ENCODE measurements at regions of chr15 and their contacts with region 1.

Region 1: DNA sequence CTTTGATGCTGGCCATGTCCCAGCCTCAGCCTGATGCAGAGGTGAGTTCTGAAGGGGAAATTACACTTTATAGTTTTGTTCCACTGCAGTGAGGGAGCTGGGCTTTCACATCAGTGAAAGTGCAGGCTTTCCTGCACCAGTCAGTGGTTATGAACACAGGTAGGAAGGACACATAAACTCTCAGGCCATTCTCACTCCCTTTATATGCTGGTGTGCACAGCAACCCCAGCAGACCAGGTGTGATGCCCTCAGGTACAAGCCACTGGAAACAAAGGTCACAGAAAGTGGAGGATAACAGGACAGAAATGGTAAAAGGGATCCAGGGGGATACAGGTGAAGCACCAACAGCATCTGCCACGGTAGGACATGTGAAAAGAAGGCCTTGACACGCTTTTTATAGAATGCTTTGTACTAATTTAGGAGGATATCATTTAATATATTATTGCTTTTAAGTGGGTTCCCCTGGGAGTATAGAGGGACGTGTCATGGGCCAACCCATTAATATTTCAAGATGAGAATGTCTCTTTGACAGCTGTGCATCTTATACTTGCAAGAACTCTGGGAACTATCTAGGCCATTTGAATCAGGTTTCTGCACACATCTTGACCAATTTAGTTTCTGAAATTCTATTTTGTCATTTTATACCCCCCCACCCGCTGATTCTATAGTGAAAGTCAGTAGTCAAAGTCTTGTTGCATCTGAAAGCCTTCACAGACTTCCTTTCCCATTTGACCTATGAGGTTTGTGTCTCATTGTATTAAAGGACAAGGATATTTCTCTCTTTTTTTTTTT is 25.0 kb upstream of the BLM start:
- DNase-seq: no peak
- H3K4me3 ChIP-seq: no peak overlapping the region
- H3K27ac ChIP-seq: peak overlapping the region in 1 of 8 donors; percentile 6
- H3K4me1 ChIP-seq: peaks cover 0 to 17% (median 7%) of the 10 kb centered on the region in 6 donors
- H3K27me3 ChIP-seq: no peaks in the 10 kb centered on the region
- CTCF ChIP-seq: no peak
- POLR2A ChIP-seq: no peak

Region 2: GRCh38 chr15:90618330-90619125 is 73.7 kb before region 1 on chr15:
- intact Hi-C with region 1: no loop called
- DNase-seq: no peak
- H3K4me3 ChIP-seq: no peak overlapping the region
- H3K27ac ChIP-seq: no peak overlapping the region
- H3K4me1 ChIP-seq: peaks cover 5 to 37% (median 15%) of the 10 kb centered on the region in 6 donors
- H3K27me3 ChIP-seq: no peaks in the 10 kb centered on the region
- CTCF ChIP-seq: no peak
- POLR2A ChIP-seq: no peak

Region 3: GRCh38 chr15:90648137-90649070 is 43.8 kb before region 1 on chr15:
- intact Hi-C with region 1: loop called (anchors 5 kb)
- DNase-seq: no peak
- H3K4me3 ChIP-seq: peak overlapping the region in 1 of 8 donors; percentile 26
- H3K27ac ChIP-seq: peak overlapping the region; percentile 1 to 83 (median 80)
- H3K4me1 ChIP-seq: peaks cover 10 to 38% (median 25%) of the 10 kb centered on the region in 6 donors
- H3K27me3 ChIP-seq: peaks cover 0 to 9% (median 0%) of the 10 kb centered on the region in 7 donors
- CTCF ChIP-seq: peak; percentile 79 to 94 (median 91)
- POLR2A ChIP-seq: no peak